ENCODE measurements at regions of chr3 and their contacts with region 1.

Region 1: GRCh38 chr3:14261229-14261628 is 82.6 kb downstream of the LSM3 start:
- DNase-seq: peak; percentile 87 to 91
- H3K4me3 ChIP-seq: no peak overlapping the region
- H3K4me3 Mint-ChIP-seq: no peak overlapping the region
- H3K27ac Mint-ChIP-seq: no peak overlapping the region
- H3K4me1 ChIP-seq: peaks cover 29% of the 10 kb centered on the region
- H3K4me1 Mint-ChIP-seq: peaks cover 27% of the 10 kb centered on the region
- H3K27me3 ChIP-seq: no peaks in the 10 kb centered on the region
- H3K27me3 Mint-ChIP-seq: no peaks in the 10 kb centered on the region
- CTCF ChIP-seq: peak; percentile 87 to 97

Region 2: GRCh38 chr3:14194865-14195264 is 66.4 kb before region 1 on chr3:
- CTCF ChIA-PET with region 1: no interaction called
- POLR2A ChIA-PET with region 1: no interaction called
- intact Hi-C with region 1: no loop called
- DNase-seq: no peak
- H3K4me3 ChIP-seq: no peak overlapping the region
- H3K4me3 Mint-ChIP-seq: no peak overlapping the region
- H3K27ac Mint-ChIP-seq: no peak overlapping the region
- H3K4me1 ChIP-seq: no peaks in the 10 kb centered on the region
- H3K4me1 Mint-ChIP-seq: peaks cover 3% of the 10 kb centered on the region
- H3K27me3 ChIP-seq: no peaks in the 10 kb centered on the region
- H3K27me3 Mint-ChIP-seq: no peaks in the 10 kb centered on the region
- CTCF ChIP-seq: no peak

Region 3: GRCh38 chr3:14210843-14211594 is 50.2 kb before region 1 on chr3:
- CTCF ChIA-PET with region 1: no interaction called
- POLR2A ChIA-PET with region 1: no interaction called
- intact Hi-C with region 1: no loop called
- DNase-seq: no peak
- H3K4me3 ChIP-seq: no peak overlapping the region
- H3K4me3 Mint-ChIP-seq: no peak overlapping the region
- H3K27ac Mint-ChIP-seq: peak overlapping the region; percentile 8
- H3K4me1 ChIP-seq: peaks cover 74% of the 10 kb centered on the region
- H3K4me1 Mint-ChIP-seq: peaks cover 61% of the 10 kb centered on the region
- H3K27me3 ChIP-seq: no peaks in the 10 kb centered on the region
- H3K27me3 Mint-ChIP-seq: no peaks in the 10 kb centered on the region
- CTCF ChIP-seq: no peak

Region 4: DNA sequence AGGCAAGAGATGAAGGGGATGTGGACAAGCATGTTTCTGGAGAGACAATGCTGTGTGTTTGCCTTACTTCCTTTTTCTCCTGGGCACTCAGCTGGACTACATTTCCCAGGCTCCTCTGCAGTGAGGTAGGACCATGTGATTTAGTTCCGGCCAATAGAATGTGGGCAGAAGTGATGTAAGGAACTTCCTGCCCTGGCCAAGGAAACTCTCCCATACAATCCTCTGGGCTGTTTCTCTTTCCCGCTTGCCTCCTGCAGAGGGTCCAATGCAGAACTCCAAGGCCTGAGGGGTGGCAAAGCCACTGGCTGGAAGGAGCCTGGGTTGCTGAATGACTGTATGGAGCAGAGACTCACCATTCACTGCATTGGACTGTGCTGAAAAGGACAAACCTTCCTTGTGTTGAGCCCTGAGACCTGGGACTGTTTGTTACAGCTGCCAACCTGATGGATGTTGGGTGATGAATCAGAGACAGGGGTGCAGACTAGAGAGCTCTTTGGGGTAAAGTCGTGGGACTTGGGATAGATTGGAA is 58.5 kb after region 1 on chr3:
- CTCF ChIA-PET with region 1: no interaction called
- POLR2A ChIA-PET with region 1: no interaction called
- intact Hi-C with region 1: loop called (anchors 1 kb)
- DNase-seq: peak; percentile 77 to 85
- H3K4me3 ChIP-seq: no peak overlapping the region
- H3K4me3 Mint-ChIP-seq: peak overlapping the region; percentile 51
- H3K27ac Mint-ChIP-seq: peak overlapping the region; percentile 86
- H3K4me1 ChIP-seq: peaks cover 53% of the 10 kb centered on the region
- H3K4me1 Mint-ChIP-seq: peaks cover 37% of the 10 kb centered on the region
- H3K27me3 ChIP-seq: no peaks in the 10 kb centered on the region
- H3K27me3 Mint-ChIP-seq: no peaks in the 10 kb centered on the region
- CTCF ChIP-seq: no peak

Region 5: DNA sequence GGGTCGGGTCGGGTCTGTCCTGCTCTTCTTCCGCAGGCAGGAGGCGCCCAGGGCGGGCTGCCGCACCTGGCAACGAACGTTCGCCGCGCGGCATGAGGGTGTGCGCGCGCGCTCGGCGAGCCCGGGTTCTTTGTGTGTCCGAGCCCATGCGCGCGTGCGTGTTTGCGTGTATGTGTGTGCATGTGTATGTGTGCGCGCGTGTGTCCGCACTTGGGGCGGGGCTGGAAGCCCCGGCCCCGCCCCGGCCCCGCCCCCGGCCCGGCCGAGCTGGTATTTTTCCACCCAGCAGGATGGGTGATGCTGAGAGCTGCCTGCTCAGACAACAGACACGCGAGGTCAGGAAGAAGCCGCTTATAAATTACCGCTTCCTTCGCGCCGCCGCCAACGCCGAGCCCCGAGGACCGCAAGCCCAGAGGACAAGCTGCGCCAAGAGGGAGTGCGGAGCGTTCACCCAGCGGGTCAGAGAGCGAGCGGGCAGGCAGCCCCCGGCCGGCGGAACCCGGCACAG is 141.1 kb after region 1 on chr3 and contains the start of gene SLC6A6:
- CTCF ChIA-PET with region 1: interaction called, 4 read pairs
- POLR2A ChIA-PET with region 1: no interaction called
- intact Hi-C with region 1: loop called (anchors 2 kb)
- DNase-seq: peak; percentile 95 to 96
- H3K4me3 ChIP-seq: peak within 1 kb of the TSS; percentile 50
- H3K4me3 Mint-ChIP-seq: peak within 1 kb of the TSS; percentile 100
- H3K27ac Mint-ChIP-seq: peak within 1 kb of the TSS; percentile 97
- H3K4me1 ChIP-seq: peaks cover 10% of the 10 kb centered on the region; the same call in 1 of the 2 replicates
- H3K4me1 Mint-ChIP-seq: peaks cover 10% of the 10 kb centered on the region
- H3K27me3 ChIP-seq: no peaks in the 10 kb centered on the region
- H3K27me3 Mint-ChIP-seq: no peaks in the 10 kb centered on the region
- CTCF ChIP-seq: peak; percentile 50 to 75
- total RNA-seq, gene SLC6A6: 49.6 and 55.3 TPM in 2 replicates

Region 6: GRCh38 chr3:14467814-14468620 is 206.8 kb after region 1 on chr3:
- CTCF ChIA-PET with region 1: interaction called, 6 read pairs
- POLR2A ChIA-PET with region 1: no interaction called
- intact Hi-C with region 1: loop called (anchors 1 kb)
- DNase-seq: peak in 1 of 2 experiments; percentile 50
- H3K4me3 ChIP-seq: no peak overlapping the region
- H3K4me3 Mint-ChIP-seq: no peak overlapping the region
- H3K27ac Mint-ChIP-seq: no peak overlapping the region
- H3K4me1 ChIP-seq: 0 out of 2 replicates have a peak, but pooled peaks cover 5% of the 10 kb centered on the region
- H3K4me1 Mint-ChIP-seq: no peaks in the 10 kb centered on the region
- H3K27me3 ChIP-seq: no peaks in the 10 kb centered on the region
- H3K27me3 Mint-ChIP-seq: no peaks in the 10 kb centered on the region
- CTCF ChIP-seq: peak; percentile 73 to 81